ENCODE measurements at regions of chr6 and their contacts with region 1.

Region 1: GRCh38 chr6:10722820-10723566 is at the start of gene TMEM14C:
- DNase-seq: peak; percentile 97
- H3K4me3 ChIP-seq: peak within 1 kb of the TSS; percentile 65 to 93
- H3K27ac ChIP-seq: peak within 1 kb of the TSS; percentile 88 to 90
- H3K4me1 ChIP-seq: peaks cover 9 to 16% of the 10 kb centered on the region in 2 experiments; a peak in 2 of 4 replicates
- H3K27me3 ChIP-seq: no peaks in the 10 kb centered on the region
- CTCF ChIP-seq: no peak
- EP300 ChIP-seq: 0 out of 4 replicates have a peak, but pooled peaks of 1 of the 2 experiments have one; percentile 5
- RAD21 ChIP-seq: no peak
- polyA plus RNA-seq, gene TMEM14C: 199 and 214 TPM in 2 replicates

Region 2: GRCh38 chr6:10694302-10695085 is 28.5 kb before region 1 on chr6 and contains the starts of genes C6orf52 and PAK1IP1:
- CTCF ChIA-PET with region 1: no interaction called
- POLR2A ChIA-PET with region 1: interaction called, 16 read pairs
- DNase-seq: peak; percentile 90
- H3K4me3 ChIP-seq: peak within 1 kb of the TSS; percentile 65 to 71
- H3K27ac ChIP-seq: peak within 1 kb of the TSS; percentile 95 to 97
- H3K4me1 ChIP-seq: peaks cover 9 to 11% of the 10 kb centered on the region in 2 experiments; a peak in 3 of 4 replicates
- H3K27me3 ChIP-seq: no peaks in the 10 kb centered on the region
- CTCF ChIP-seq: no peak; the same call in 1 of the 2 replicates
- EP300 ChIP-seq: no peak
- RAD21 ChIP-seq: no peak
- polyA plus RNA-seq, gene C6orf52: 0.71 and 1.4 TPM in 2 replicates
- polyA plus RNA-seq, gene PAK1IP1: 16.2 and 19.1 TPM in 2 replicates

Region 3: DNA sequence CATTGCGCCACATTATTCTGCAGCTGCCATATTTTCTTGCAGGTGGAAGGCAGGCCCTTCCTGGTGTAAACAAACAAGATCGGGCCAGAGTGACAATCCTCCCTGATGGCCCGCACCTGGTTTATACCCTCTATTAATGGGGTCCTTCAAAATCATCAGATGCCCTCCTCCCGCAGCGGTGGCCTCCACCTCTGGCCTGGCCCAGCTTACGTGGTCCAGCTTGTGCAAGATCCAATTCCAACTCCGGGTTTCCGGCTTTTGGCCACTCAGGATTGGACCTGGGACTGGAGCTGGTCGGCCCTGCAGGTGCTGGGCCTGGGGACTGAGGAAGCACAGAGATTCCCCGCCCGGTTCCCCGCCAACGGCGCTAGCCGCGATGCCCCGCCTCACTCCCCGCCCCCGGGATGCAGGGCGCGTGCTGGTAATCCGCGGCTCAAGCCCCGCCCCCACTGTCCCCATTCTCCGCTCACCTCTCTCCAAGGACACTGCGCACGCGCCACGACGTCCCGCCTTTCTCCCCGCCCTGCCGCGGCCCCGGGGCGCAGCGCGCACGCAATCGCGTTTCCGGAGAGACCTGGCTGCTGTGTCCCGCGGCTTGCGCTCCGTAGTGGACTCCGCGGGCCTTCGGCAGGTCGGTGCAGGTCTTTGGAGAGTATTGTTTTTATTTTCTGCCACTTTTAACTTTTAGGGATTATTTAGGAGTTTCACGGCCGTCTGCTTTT is 24.4 kb after region 1 on chr6 and contains the start of gene TMEM14B:
- CTCF ChIA-PET with region 1: interaction called, 4 read pairs
- POLR2A ChIA-PET with region 1: interaction called, 66 read pairs
- DNase-seq: peak; percentile 99
- H3K4me3 ChIP-seq: peak within 1 kb of the TSS; percentile 91 to 93
- H3K27ac ChIP-seq: peak within 1 kb of the TSS; percentile 36 to 88; a peak in 3 of 4 replicates
- H3K4me1 ChIP-seq: peaks cover 6 to 20% of the 10 kb centered on the region in 2 experiments; a peak in 3 of 4 replicates
- H3K27me3 ChIP-seq: no peaks in the 10 kb centered on the region
- CTCF ChIP-seq: no peak
- EP300 ChIP-seq: no peak; a peak in 1 of 4 replicates
- RAD21 ChIP-seq: no peak
- polyA plus RNA-seq, gene TMEM14B: 89.0 and 93.6 TPM in 2 replicates

Region 4: DNA sequence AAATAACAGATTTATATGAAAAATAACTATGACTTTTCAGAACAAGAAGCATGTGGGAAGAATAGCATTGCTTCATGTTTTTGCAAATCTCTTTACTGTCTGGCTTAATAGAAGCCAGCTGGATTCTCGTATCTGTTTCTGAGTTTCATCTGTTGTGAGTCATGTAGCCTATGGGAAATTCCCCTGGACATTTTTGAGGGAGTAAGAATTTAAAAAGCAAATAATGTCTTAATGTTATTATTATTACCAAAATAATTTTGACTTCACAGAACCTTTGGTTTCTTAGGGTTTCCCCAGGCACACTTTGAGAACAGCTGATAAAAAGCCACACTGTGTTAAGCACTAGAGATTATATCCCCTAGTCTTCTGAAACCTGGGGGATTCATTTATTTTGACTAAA is 239.7 kb after region 1 on chr6:
- CTCF ChIA-PET with region 1: no interaction called
- POLR2A ChIA-PET with region 1: no interaction called
- DNase-seq: peak; percentile 23
- H3K4me3 ChIP-seq: no peak overlapping the region
- H3K27ac ChIP-seq: peak overlapping the region in 1 of 2 experiments; percentile 58; a peak in 3 of 4 replicates
- H3K4me1 ChIP-seq: peaks cover 3% of the 10 kb centered on the region in 2 experiments; a peak in 2 of 4 replicates
- H3K27me3 ChIP-seq: no peaks in the 10 kb centered on the region
- CTCF ChIP-seq: no peak
- EP300 ChIP-seq: peak; percentile 7 to 55; a peak in 1 of 4 replicates
- RAD21 ChIP-seq: no peak

Measured in SK-N-SH (cell line).